CD4-positive, alpha-beta memory T cell (primary cell): ENCODE measurements at regions of chr11 and their contacts with region 1.

Region 1: GRCh38 chr11:72080256-72080974 is at the starts of genes LRRC51 and NUMA1:
- DNase-seq: peak; percentile 98 to 100 (median 99)
- H3K4me3 ChIP-seq: peak within 1 kb of the TSS; percentile 74 to 79
- H3K4me3 Mint-ChIP-seq: peak within 1 kb of the TSS; percentile 89 to 96 (median 93)
- H3K27ac ChIP-seq: peak within 1 kb of the TSS; percentile 75
- H3K27ac Mint-ChIP-seq: peak within 1 kb of the TSS; percentile 91 to 100 (median 99)
- H3K4me1 ChIP-seq: peaks cover 27% of the 10 kb centered on the region
- H3K4me1 Mint-ChIP-seq: peaks cover 31 to 53% (median 38%) of the 10 kb centered on the region in 4 donors
- H3K27me3 ChIP-seq: no peaks in the 10 kb centered on the region
- H3K27me3 Mint-ChIP-seq: no peaks in the 10 kb centered on the region
- total RNA-seq, gene LRRC51: 4.2 to 4.5 TPM
- total RNA-seq, gene NUMA1: 376 to 380 TPM

Region 2: GRCh38 chr11:71928737-71929452 is 151.5 kb before region 1 on chr11 and contains the start of gene RNF121:
- CTCF ChIA-PET with region 1: no interaction called
- POLR2A ChIA-PET with region 1: interaction called, 3 read pairs
- intact Hi-C with region 1: loop called (anchors 1 kb)
- DNase-seq: peak; percentile 96 to 99 (median 96)
- H3K4me3 ChIP-seq: peak within 1 kb of the TSS; percentile 92 to 96
- H3K4me3 Mint-ChIP-seq: peak within 1 kb of the TSS; percentile 95 to 100 (median 98)
- H3K27ac ChIP-seq: peak within 1 kb of the TSS; percentile 84
- H3K27ac Mint-ChIP-seq: peak within 1 kb of the TSS; percentile 92 to 100 (median 99)
- H3K4me1 ChIP-seq: peaks cover 41% of the 10 kb centered on the region
- H3K4me1 Mint-ChIP-seq: peaks cover 40 to 60% (median 50%) of the 10 kb centered on the region in 4 donors
- H3K27me3 ChIP-seq: no peaks in the 10 kb centered on the region
- H3K27me3 Mint-ChIP-seq: no peaks in the 10 kb centered on the region
- total RNA-seq, gene RNF121: 28.0 to 33.0 TPM

Region 3: DNA sequence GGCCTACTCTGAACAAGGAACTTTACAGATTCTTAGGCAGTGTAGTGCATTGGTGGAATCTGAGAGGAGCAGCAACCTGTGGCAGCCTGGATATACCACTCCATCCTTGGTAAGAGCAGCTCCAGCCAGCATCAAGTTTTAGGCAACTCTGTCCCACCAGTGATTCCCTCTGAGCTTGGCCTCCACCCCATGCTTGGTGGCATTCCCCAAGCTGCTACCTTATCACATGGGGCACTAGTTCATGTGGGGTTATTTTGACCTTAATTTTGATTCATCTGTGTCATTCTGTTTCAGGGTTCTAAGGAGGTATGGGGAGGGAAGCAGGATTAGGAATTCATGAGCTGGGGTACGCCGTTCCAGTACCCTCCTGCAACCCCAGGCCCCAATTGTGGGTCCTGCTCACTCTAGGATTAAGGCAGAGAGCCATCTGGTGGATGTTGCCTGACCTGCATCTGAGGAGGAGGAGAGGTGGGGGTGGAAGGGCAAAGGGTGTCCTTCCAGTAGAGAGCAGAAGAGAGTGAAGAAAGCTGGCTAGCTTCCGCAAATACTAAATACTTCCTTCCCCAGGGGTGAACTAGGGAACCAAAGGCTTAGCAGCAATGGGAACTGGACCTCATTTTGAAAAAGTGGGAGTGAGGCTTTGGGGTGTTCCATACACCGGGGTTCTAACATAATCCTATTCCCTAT is 10.7 kb after region 1 on chr11:
- CTCF ChIA-PET with region 1: interaction called, 26 read pairs
- POLR2A ChIA-PET with region 1: interaction called, 5 read pairs
- intact Hi-C with region 1: no loop called
- DNase-seq: peak; percentile 57 to 80 (median 66)
- H3K4me3 ChIP-seq: no peak overlapping the region
- H3K4me3 Mint-ChIP-seq: no peak overlapping the region
- H3K27ac ChIP-seq: no peak overlapping the region
- H3K27ac Mint-ChIP-seq: peak overlapping the region; percentile 10 to 91 (median 81)
- H3K4me1 ChIP-seq: no peaks in the 10 kb centered on the region
- H3K4me1 Mint-ChIP-seq: peaks cover 4 to 11% (median 9%) of the 10 kb centered on the region in 4 donors
- H3K27me3 ChIP-seq: no peaks in the 10 kb centered on the region
- H3K27me3 Mint-ChIP-seq: no peaks in the 10 kb centered on the region

Region 4: DNA sequence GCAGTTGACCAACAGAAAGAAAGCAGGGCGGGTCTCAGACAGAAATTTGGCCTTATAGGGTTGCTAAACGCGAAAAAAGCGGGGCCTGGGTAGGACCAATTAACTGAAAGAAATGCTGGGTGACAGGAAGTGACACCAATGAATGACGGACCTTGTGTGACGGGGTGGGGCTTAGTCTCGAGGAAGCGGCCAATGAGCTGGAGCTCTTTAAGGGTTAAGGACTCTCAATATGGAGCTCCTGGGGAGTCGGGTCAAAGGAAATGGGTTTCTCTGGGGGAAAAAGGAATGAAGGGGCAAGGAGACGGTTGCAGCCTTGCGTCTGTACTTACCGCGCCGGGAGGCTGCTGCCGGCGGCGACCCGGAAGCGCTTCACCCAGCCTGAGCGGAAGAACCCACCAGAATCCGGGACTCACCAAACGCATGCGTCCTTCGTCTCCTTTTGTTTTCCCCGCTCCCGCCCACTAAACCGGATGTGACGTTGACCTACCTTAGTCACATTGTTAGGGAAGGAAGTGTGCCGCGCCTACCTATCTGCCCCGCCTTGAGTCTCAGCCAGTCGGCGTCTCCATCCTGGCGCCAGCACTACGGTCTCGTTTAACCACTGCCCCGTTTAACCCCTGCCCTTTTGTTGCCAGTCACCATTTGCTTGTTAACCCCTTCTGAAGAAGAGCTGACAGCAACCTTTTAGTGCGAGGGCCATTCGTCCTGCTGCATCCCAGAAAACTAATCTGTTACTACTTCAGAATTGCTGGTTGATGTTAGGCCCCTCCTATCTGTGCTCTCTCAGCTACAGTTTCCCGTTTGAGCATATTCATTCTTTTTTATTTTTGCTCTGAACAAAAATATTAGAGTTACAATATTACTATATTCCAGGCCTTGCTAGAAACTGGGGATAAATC is 32.2 kb after region 1 on chr11 and contains the start of gene ANAPC15:
- CTCF ChIA-PET with region 1: interaction called, 3 read pairs
- POLR2A ChIA-PET with region 1: interaction called, 10 read pairs
- intact Hi-C with region 1: loop called (anchors 1 kb)
- DNase-seq: peak; percentile 98 to 100 (median 99)
- H3K4me3 ChIP-seq: peak within 1 kb of the TSS; percentile 79 to 97
- H3K4me3 Mint-ChIP-seq: peak within 1 kb of the TSS; percentile 96 to 99 (median 97)
- H3K27ac ChIP-seq: peak within 1 kb of the TSS; percentile 97
- H3K27ac Mint-ChIP-seq: peak within 1 kb of the TSS; percentile 98 to 100 (median 99)
- H3K4me1 ChIP-seq: peaks cover 18% of the 10 kb centered on the region
- H3K4me1 Mint-ChIP-seq: peaks cover 15 to 34% (median 23%) of the 10 kb centered on the region in 4 donors
- H3K27me3 ChIP-seq: no peaks in the 10 kb centered on the region
- H3K27me3 Mint-ChIP-seq: peaks cover 2 to 3% of the 10 kb centered on the region in 2 donors
- total RNA-seq, gene ANAPC15: 38.6 to 40.2 TPM